Activated naive CD4-positive, alpha-beta T cell treated with anti-CD3 and anti-CD28 coated beads for 36 hours (primary cell): ENCODE measurements at regions of chr3 and their contacts with region 1.

Region 1: GRCh38 chr3:9809615-9810432 is at the start of gene TTLL3:
- DNase-seq: peak; percentile 38
- H3K4me3 Mint-ChIP-seq: peak within 1 kb of the TSS; percentile 81
- H3K27ac Mint-ChIP-seq: peak within 1 kb of the TSS; percentile 92
- H3K4me1 Mint-ChIP-seq: peaks cover 32% of the 10 kb centered on the region
- H3K27me3 Mint-ChIP-seq: no peaks in the 10 kb centered on the region
- total RNA-seq, gene TTLL3: 46.3 to 47.1 TPM

Region 2: GRCh38 chr3:9503283-9503682 is 306.5 kb before region 1 on chr3:
- CTCF ChIA-PET with region 1: no interaction called
- intact Hi-C with region 1: loop called (anchors 10 kb)
- DNase-seq: peak; percentile 83
- H3K4me3 Mint-ChIP-seq: no peak overlapping the region
- H3K27ac Mint-ChIP-seq: no peak overlapping the region
- H3K4me1 Mint-ChIP-seq: peaks cover 6% of the 10 kb centered on the region
- H3K27me3 Mint-ChIP-seq: peaks cover 24% of the 10 kb centered on the region

Region 3: DNA sequence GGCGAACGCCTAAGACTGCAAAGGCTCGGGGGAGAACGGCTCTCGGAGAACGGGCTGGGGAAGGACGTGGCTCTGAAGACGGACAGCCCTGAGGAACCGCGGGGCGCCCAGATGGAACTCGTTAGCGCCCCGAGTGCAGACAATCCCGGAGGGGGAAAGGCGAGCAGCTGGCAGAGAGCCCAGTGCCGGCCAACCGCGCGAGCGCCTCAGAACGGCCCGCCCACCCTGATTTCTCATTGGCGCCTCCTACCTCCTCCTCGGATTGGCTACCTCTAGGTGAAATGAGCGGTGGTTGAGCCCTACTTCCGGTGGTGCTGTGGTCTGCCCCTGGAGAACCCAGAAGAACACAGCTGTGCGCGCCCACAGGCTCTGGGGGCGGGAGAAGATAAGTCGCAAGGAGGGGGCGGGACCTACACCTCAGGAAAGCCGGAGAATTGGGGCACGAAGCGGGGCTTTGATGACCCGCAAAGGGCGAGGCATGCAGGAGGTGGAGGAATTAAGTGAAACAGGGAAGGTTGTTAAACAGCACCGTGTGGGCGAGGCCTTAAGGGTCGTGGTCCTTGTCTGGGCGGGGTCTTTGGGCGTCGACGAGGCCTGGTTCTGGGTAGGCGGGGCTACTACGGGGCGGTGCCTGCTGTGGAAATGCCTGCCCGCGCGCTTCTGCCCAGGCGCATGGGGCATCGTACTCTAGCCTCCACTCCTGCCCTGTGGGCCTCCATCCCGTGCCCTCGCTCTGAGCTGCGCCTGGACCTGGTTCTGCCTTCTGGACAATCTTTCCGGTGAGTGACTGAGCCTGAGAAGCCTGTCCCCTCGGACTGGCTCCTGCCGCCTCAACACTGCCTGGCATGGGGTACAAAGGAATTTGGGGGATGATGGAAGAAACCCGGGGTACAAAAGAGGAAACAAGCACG is 59.9 kb before region 1 on chr3 and contains the start of gene OGG1:
- CTCF ChIA-PET with region 1: no interaction called
- intact Hi-C with region 1: loop called (anchors 1 kb)
- DNase-seq: peak; percentile 98
- H3K4me3 Mint-ChIP-seq: peak within 1 kb of the TSS; percentile 97
- H3K27ac Mint-ChIP-seq: peak within 1 kb of the TSS; percentile 94
- H3K4me1 Mint-ChIP-seq: peaks cover 50% of the 10 kb centered on the region
- H3K27me3 Mint-ChIP-seq: no peaks in the 10 kb centered on the region
- total RNA-seq, gene OGG1: 26.1 to 28.5 TPM

Region 4: GRCh38 chr3:9786825-9787669 is 22.8 kb before region 1 on chr3:
- CTCF ChIA-PET with region 1: interaction called, 5 read pairs
- intact Hi-C with region 1: loop called (anchors 1 kb)
- DNase-seq: no peak
- H3K4me3 Mint-ChIP-seq: peak overlapping the region; percentile 2
- H3K27ac Mint-ChIP-seq: peak overlapping the region; percentile 93
- H3K4me1 Mint-ChIP-seq: peaks cover 57% of the 10 kb centered on the region
- H3K27me3 Mint-ChIP-seq: no peaks in the 10 kb centered on the region

Region 5: GRCh38 chr3:9843715-9844438 is 34.1 kb after region 1 on chr3 and contains the start of gene RPUSD3:
- CTCF ChIA-PET with region 1: interaction called, 3 read pairs
- intact Hi-C with region 1: loop called (anchors 1 kb)
- DNase-seq: peak; percentile 98
- H3K4me3 Mint-ChIP-seq: peak within 1 kb of the TSS; percentile 98
- H3K27ac Mint-ChIP-seq: peak within 1 kb of the TSS; percentile 89
- H3K4me1 Mint-ChIP-seq: peaks cover 30% of the 10 kb centered on the region
- H3K27me3 Mint-ChIP-seq: no peaks in the 10 kb centered on the region
- total RNA-seq, gene RPUSD3: 82.0 to 83.7 TPM